ENCODE measurements at regions of chr2 and their contacts with region 1.

Region 1: DNA sequence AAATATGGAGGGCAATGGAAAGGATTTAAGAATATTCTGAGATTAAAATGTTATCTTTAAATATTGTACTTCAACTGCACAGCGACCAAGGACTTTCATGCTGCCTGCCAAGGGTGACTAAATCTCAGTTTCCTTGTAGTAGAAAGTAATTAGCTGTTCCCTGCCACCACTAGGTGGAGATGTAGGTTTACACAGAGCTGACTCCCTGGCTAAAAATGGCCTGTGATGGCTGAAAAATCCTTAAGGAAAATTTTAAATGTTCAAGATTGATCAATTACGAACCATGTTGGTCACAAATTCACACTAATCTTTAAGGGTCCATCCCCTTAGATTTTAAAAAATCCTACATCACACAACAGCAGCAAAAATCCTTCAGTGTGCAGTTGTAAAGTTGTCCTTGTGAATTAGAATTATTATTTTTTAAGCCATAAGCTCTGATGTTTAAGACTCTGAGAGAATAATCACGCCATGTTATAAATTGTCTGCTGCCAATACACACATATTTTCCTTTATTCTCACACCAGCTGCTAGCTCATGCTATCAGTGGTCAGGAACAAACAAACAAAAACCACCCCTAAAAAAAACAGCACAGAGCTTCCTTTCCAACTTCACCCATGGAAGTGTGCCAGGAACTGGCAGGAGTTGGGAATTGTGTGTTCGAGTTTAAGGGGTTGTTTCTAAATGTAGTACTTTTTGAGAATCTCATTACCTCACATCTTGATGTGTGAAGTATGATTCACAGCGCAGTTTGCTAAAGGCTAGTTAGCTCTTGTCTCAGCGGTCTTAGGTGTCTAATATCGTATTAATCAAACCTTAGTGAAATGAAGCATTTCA is 399.8 kb downstream of the TMEM182 start:
- DNase-seq: no peak
- H3K4me3 Mint-ChIP-seq: no peak overlapping the region
- H3K27ac Mint-ChIP-seq: no peak overlapping the region
- H3K4me1 Mint-ChIP-seq: no peaks in the 10 kb centered on the region
- H3K27me3 Mint-ChIP-seq: no peaks in the 10 kb centered on the region

Region 2: GRCh38 chr2:103103678-103104077 is 58.0 kb before region 1 on chr2:
- CTCF ChIA-PET with region 1: no interaction called
- POLR2A ChIA-PET with region 1: no interaction called
- intact Hi-C with region 1: no loop called
- DNase-seq: no peak
- H3K4me3 Mint-ChIP-seq: no peak overlapping the region
- H3K27ac Mint-ChIP-seq: no peak overlapping the region
- H3K4me1 Mint-ChIP-seq: no peaks in the 10 kb centered on the region
- H3K27me3 Mint-ChIP-seq: no peaks in the 10 kb centered on the region

Region 3: GRCh38 chr2:103213028-103213542 is 51.4 kb after region 1 on chr2:
- CTCF ChIA-PET with region 1: no interaction called
- POLR2A ChIA-PET with region 1: no interaction called
- intact Hi-C with region 1: no loop called
- DNase-seq: no peak
- H3K4me3 Mint-ChIP-seq: no peak overlapping the region
- H3K27ac Mint-ChIP-seq: no peak overlapping the region
- H3K4me1 Mint-ChIP-seq: no peaks in the 10 kb centered on the region
- H3K27me3 Mint-ChIP-seq: no peaks in the 10 kb centered on the region

Region 4: GRCh38 chr2:104412384-104412783 is 1250.7 kb after region 1 on chr2:
- CTCF ChIA-PET with region 1: no interaction called
- POLR2A ChIA-PET with region 1: no interaction called
- intact Hi-C with region 1: loop called (anchors 10 kb)
- DNase-seq: peak; percentile 29
- H3K4me3 Mint-ChIP-seq: no peak overlapping the region
- H3K27ac Mint-ChIP-seq: no peak overlapping the region
- H3K4me1 Mint-ChIP-seq: no peaks in the 10 kb centered on the region
- H3K27me3 Mint-ChIP-seq: peaks cover 3% of the 10 kb centered on the region